Activated naive CD4-positive, alpha-beta T cell treated with anti-CD3 and anti-CD28 coated beads, Interleukin-2, amount 10 ng/mL, durations not matched to agents 7 days and 5 days (primary cell): ENCODE measurements at regions of chr12 and their contacts with region 1.

Region 1: GRCh38 chr12:57452937-57453509 is 2.1 kb upstream of the INHBE start:
- DNase-seq: peak; percentile 74
- H3K4me3 Mint-ChIP-seq: no peak overlapping the region
- H3K27ac Mint-ChIP-seq: no peak overlapping the region
- H3K4me1 Mint-ChIP-seq: peaks cover 18% of the 10 kb centered on the region
- H3K27me3 Mint-ChIP-seq: peaks cover 48% of the 10 kb centered on the region

Region 2: DNA sequence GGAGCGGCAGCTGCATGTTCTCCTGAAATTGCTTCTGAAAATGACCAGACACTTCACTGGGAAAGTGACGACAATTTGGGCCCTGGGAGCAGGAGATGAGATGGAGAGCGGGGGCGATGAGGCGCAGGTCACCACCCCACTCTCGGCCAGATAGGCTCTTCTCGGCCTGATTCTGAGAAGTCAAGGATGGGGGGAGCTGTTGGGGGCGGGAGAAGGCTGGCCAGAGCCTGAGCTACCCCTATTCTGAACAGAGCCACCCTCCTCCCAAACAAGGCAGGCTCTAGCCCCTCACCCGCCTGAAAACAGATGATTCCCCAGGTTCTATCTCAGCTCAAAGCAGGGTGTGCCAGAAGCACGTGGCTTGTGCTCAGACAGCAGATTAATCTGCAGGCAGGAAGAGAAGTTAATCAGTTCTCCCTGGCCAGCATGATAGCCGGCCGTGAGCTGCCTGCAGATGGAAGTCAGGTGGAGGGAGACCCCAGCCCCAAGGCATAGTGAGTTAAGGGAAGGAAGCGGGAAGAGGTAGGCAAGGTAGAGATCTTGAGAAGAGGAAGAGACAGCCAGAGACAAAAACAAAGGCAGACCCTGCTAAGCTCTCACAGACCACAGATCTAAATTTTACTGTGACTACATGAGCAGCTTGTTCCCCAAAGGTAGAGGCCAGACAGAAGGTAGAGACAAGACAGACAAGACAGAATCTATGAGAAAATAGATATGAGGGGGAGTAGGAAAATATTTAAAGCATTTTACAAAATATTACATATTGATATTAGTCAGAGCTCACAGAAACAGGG is 425.8 kb before region 1 on chr12:
- CTCF ChIA-PET with region 1: no interaction called
- DNase-seq: no peak
- H3K4me3 Mint-ChIP-seq: no peak overlapping the region
- H3K27ac Mint-ChIP-seq: no peak overlapping the region
- H3K4me1 Mint-ChIP-seq: peaks cover 38% of the 10 kb centered on the region
- H3K27me3 Mint-ChIP-seq: peaks cover 4% of the 10 kb centered on the region

Region 3: GRCh38 chr12:57238854-57239554 is 214.0 kb before region 1 on chr12:
- CTCF ChIA-PET with region 1: interaction called, 10 read pairs
- DNase-seq: peak; percentile 90
- H3K4me3 Mint-ChIP-seq: peak overlapping the region; percentile 95
- H3K27ac Mint-ChIP-seq: peak overlapping the region; percentile 49
- H3K4me1 Mint-ChIP-seq: peaks cover 87% of the 10 kb centered on the region
- H3K27me3 Mint-ChIP-seq: peaks cover 89% of the 10 kb centered on the region

Region 4: GRCh38 chr12:57248934-57249742 is 203.9 kb before region 1 on chr12:
- CTCF ChIA-PET with region 1: interaction called, 14 read pairs
- DNase-seq: no peak
- H3K4me3 Mint-ChIP-seq: peak overlapping the region; percentile 19
- H3K27ac Mint-ChIP-seq: no peak overlapping the region
- H3K4me1 Mint-ChIP-seq: peaks cover 11% of the 10 kb centered on the region
- H3K27me3 Mint-ChIP-seq: peaks cover 10% of the 10 kb centered on the region

Region 5: DNA sequence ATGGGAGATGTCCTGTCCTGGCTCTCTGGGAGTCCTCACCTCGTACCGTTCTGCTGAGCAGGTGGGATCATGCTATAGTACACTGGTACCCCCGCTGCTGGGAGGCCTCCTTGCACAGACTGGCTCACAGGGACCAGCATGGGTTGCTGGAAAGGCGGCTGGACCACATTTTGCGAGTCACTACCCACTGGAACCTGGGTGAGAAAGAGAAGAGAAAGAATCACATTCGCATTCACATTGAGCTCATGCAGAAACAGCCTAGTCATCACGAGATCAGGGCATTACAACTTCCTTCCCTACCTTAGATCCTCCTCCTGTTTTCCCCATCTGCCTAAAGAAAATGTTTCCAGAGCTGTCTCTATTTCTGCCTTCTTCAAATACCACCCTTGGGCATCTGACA is 184.8 kb before region 1 on chr12:
- CTCF ChIA-PET with region 1: interaction called, 90 read pairs
- DNase-seq: no peak
- H3K4me3 Mint-ChIP-seq: no peak overlapping the region
- H3K27ac Mint-ChIP-seq: no peak overlapping the region
- H3K4me1 Mint-ChIP-seq: peaks cover 4% of the 10 kb centered on the region
- H3K27me3 Mint-ChIP-seq: no peaks in the 10 kb centered on the region

Region 6: GRCh38 chr12:57309420-57309819 is 143.6 kb before region 1 on chr12:
- CTCF ChIA-PET with region 1: interaction called, 57 read pairs
- DNase-seq: no peak
- H3K4me3 Mint-ChIP-seq: no peak overlapping the region
- H3K27ac Mint-ChIP-seq: no peak overlapping the region
- H3K4me1 Mint-ChIP-seq: no peaks in the 10 kb centered on the region
- H3K27me3 Mint-ChIP-seq: no peaks in the 10 kb centered on the region

Region 7: GRCh38 chr12:57435293-57435692 is 17.7 kb before region 1 on chr12:
- CTCF ChIA-PET with region 1: interaction called, 17 read pairs
- DNase-seq: no peak
- H3K4me3 Mint-ChIP-seq: peak overlapping the region; percentile 10
- H3K27ac Mint-ChIP-seq: no peak overlapping the region
- H3K4me1 Mint-ChIP-seq: peaks cover 18% of the 10 kb centered on the region
- H3K27me3 Mint-ChIP-seq: peaks cover 15% of the 10 kb centered on the region

Region 8: GRCh38 chr12:57654042-57654441 is 201.0 kb after region 1 on chr12:
- CTCF ChIA-PET with region 1: no interaction called
- DNase-seq: no peak
- H3K4me3 Mint-ChIP-seq: no peak overlapping the region
- H3K27ac Mint-ChIP-seq: no peak overlapping the region
- H3K4me1 Mint-ChIP-seq: no peaks in the 10 kb centered on the region
- H3K27me3 Mint-ChIP-seq: peaks cover 8% of the 10 kb centered on the region